Activated naive CD4-positive, alpha-beta T cell treated with anti-CD3 and anti-CD28 coated beads for 36 hours (primary cell): ENCODE measurements at regions of chr4 and their contacts with region 1.

Region 1: DNA sequence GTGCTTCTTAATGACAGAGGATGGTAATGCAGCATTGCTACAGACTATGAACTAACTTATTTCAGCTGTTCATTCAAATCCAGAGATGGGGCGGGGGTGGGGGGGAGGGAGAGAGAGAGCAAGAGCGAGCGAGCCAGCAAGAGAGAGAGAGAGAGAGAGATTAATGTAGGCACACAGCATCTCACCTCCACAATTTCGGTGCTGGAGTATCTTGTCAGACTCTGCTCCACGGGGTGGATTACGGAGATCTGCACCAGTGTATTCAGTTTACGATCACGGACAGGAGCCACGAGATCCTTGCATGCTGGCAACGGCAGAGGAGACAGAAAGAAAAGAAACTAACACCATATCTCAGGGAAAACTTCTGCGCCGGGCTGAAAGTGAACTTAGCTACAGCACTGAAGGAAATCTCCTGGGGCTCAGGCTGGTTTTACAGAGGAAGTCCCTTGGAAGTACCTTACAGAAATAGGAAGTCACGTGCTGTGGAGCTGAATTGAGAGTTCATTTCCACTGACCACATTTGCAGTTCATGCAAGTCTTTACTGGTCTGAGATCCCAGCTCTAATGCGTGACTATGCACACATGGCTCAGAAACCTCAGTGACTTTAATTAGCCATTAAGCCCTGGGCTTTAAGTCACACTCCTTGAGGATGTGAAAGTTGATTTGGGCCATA is 440.9 kb downstream of the INPP4B start:
- DNase-seq: peak; percentile 75
- H3K4me3 Mint-ChIP-seq: peak overlapping the region; percentile 99
- H3K27ac Mint-ChIP-seq: peak overlapping the region; percentile 100
- H3K4me1 Mint-ChIP-seq: peaks cover 53% of the 10 kb centered on the region
- H3K27me3 Mint-ChIP-seq: no peaks in the 10 kb centered on the region

Region 2: GRCh38 chr4:141636082-141636770 is 768.9 kb before region 1 on chr4 and contains the start of gene IL15:
- CTCF ChIA-PET with region 1: no interaction called
- intact Hi-C with region 1: loop called (anchors 10 kb)
- DNase-seq: peak; percentile 86
- H3K4me3 Mint-ChIP-seq: peak within 1 kb of the TSS; percentile 89
- H3K27ac Mint-ChIP-seq: no peak within 1 kb of the TSS
- H3K4me1 Mint-ChIP-seq: peaks cover 10% of the 10 kb centered on the region
- H3K27me3 Mint-ChIP-seq: peaks cover 9% of the 10 kb centered on the region
- total RNA-seq, gene IL15: 0.19 to 0.52 TPM

Region 3: DNA sequence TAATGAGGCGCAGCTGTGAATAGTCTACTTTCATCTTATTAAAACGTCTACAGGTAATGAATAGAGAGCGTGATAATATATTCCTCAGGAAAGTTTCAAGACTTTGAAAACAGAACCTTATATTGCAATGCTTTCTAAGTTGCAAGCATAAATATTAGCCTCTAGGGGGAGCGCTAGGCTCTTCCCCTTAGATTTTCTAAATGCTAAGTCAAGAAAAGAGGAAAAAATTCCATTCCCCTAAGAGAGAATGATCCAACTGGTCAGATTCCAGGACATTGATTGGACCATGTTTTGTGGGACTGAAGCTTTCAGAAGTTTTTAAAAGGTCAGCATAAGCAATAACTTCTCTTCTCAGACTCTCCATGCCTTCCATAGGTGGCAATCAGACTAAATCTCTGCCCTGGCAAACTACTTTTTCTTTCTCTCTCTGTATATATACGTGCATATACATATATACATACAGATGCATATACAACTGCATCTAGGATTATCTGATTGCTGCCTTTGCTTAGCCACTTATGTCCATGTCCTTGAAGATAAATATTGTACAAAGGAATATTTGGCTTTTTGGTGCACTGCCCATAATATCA is 51.9 kb before region 1 on chr4:
- CTCF ChIA-PET with region 1: interaction called, 18 read pairs
- intact Hi-C with region 1: loop called (anchors 1 kb)
- DNase-seq: no peak
- H3K4me3 Mint-ChIP-seq: peak overlapping the region; percentile 48
- H3K27ac Mint-ChIP-seq: peak overlapping the region; percentile 90
- H3K4me1 Mint-ChIP-seq: peaks cover 94% of the 10 kb centered on the region
- H3K27me3 Mint-ChIP-seq: no peaks in the 10 kb centered on the region

Region 4: DNA sequence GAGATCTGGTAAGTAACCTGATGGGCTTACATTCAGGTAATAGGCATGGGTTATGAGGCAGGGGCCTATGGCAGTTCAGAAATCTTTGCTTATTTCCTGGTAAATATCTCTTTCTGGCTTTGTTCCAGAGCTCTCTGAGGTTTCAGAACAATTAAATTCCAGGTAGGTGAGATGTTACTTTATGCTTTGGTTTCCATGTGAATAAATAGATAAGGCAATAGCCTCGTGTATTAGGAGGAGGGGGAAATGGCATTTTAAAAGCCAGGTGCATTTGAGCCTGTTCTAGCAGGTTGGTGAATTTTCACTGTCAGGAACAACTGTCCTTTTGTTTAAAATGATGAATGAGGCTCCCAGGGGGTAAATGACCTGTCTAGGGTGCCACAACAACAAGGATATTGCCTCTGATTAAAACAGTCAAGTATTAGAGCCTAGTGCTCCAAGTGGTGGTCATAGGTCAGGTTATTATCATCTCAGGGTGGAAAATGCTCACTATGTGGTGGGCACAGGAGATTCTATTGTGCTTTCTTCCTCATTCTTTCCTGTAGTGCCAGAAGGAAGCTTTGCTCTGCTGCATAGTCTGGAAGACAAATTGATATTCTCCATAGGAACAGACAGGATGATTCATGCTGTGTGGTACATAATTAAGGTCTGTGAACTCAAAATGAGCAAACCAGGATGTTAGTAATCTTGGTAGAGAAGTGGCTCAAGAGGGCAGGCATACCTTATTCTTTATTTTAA is 144.7 kb after region 1 on chr4:
- CTCF ChIA-PET with region 1: interaction called, 6 read pairs
- intact Hi-C with region 1: loop called (anchors 1 kb)
- DNase-seq: no peak
- H3K4me3 Mint-ChIP-seq: no peak overlapping the region
- H3K27ac Mint-ChIP-seq: peak overlapping the region; percentile 60
- H3K4me1 Mint-ChIP-seq: peaks cover 71% of the 10 kb centered on the region
- H3K27me3 Mint-ChIP-seq: no peaks in the 10 kb centered on the region

Region 5: DNA sequence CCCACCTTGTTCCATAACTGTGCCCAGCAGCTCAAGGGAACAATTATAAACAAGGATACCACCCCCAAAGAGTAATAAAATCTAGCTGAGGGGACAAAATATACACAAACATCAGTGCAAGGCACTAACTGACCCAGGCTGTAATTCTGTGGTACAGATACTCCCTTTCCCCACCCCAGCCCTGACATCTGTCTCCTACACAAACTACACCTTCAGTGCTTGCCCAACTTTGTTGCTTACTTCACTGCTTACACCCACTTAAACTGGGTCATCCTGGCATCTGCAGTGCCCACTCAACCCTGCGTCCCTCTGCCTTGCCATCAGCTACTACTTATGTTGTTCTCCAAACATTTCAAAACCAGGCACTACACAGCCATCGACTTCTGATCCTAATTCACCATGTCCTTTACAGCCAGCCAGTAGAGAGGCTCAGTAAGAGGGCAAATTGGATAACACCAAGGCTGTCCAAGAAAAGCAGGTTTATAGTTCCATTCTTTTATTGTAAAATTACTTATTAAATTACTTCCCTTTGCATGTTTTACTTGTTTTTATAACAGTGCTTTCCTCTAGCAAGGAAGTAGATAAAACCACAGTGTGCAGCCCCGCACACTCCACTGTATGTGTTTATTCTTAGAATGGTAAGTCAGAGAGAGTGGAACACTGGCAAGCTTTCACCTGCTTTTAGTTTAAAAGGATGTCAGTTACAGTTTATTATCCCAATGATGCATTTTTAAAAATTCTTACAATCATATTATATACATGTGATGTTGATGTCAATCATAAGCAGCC is 291.4 kb after region 1 on chr4:
- CTCF ChIA-PET with region 1: no interaction called
- intact Hi-C with region 1: loop called (anchors 5 kb)
- DNase-seq: peak; percentile 37
- H3K4me3 Mint-ChIP-seq: peak overlapping the region; percentile 55
- H3K27ac Mint-ChIP-seq: peak overlapping the region; percentile 93
- H3K4me1 Mint-ChIP-seq: peaks cover 62% of the 10 kb centered on the region
- H3K27me3 Mint-ChIP-seq: no peaks in the 10 kb centered on the region

Region 6: DNA sequence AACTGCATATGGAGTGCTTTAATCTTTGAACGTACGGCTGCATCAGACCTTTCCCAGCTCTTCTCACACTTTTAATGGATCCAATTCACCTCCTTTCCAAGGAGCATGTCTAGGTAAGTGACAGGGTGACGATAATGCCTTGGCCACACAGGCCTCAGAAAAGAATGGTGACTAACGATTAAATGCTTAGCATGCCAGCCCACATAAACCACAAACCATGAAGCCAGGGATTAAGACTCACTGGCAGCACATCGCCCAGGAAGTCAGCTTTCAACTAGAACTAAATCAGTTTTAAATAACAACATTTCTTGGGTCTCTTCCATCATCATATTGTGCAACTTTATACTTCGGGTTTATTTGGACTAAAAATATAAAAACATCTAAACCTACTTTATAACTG is 412.3 kb after region 1 on chr4:
- CTCF ChIA-PET with region 1: no interaction called
- intact Hi-C with region 1: loop called (anchors 2 kb)
- DNase-seq: peak; percentile 80
- H3K4me3 Mint-ChIP-seq: peak overlapping the region; percentile 27
- H3K27ac Mint-ChIP-seq: peak overlapping the region; percentile 30
- H3K4me1 Mint-ChIP-seq: peaks cover 23% of the 10 kb centered on the region
- H3K27me3 Mint-ChIP-seq: no peaks in the 10 kb centered on the region

Region 7: GRCh38 chr4:143189528-143189927 is 784.4 kb after region 1 on chr4:
- CTCF ChIA-PET with region 1: no interaction called
- intact Hi-C with region 1: loop called (anchors 2 kb)
- DNase-seq: no peak
- H3K4me3 Mint-ChIP-seq: peak overlapping the region; percentile 63
- H3K27ac Mint-ChIP-seq: peak overlapping the region; percentile 52
- H3K4me1 Mint-ChIP-seq: peaks cover 45% of the 10 kb centered on the region
- H3K27me3 Mint-ChIP-seq: no peaks in the 10 kb centered on the region